Heart left ventricle (tissue), 16 donors: ENCODE measurements at regions of chr9 and their contacts with region 1.

Region 1: GRCh38 chr9:129080602-129081387 is at the start of gene DOLPP1:
- DNase-seq: peak; percentile 99 to 100 (median 100)
- ATAC-seq: peak; percentile 98 to 99 (median 98)
- H3K4me3 ChIP-seq: peak within 1 kb of the TSS; percentile 64 to 98 (median 84)
- H3K27ac ChIP-seq: peak within 1 kb of the TSS; percentile 42 to 93 (median 82)
- H3K4me1 ChIP-seq: peaks cover 6 to 26% (median 17%) of the 10 kb centered on the region in 12 donors
- H3K27me3 ChIP-seq: no peaks in the 10 kb centered on the region
- CTCF ChIP-seq: no peak
- POLR2A ChIP-seq: peak in 1 of 2 donors; percentile 53
- total RNA-seq, gene DOLPP1: 3.2 to 10.3 (median 5.8) TPM

Region 2: GRCh38 chr9:128881901-128882681 is 198.7 kb before region 1 on chr9 and contains the starts of genes KYAT1 and LRRC8A:
- intact Hi-C with region 1: no loop called
- DNase-seq: peak; percentile 98 to 99 (median 98)
- ATAC-seq: peak; percentile 87 to 94 (median 90)
- H3K4me3 ChIP-seq: peak within 1 kb of the TSS; percentile 80 to 100 (median 98)
- H3K27ac ChIP-seq: peak within 1 kb of the TSS; percentile 93 to 100 (median 99)
- H3K4me1 ChIP-seq: peaks cover 8 to 82% (median 49%) of the 10 kb centered on the region in 12 donors
- H3K27me3 ChIP-seq: no peaks in the 10 kb centered on the region
- CTCF ChIP-seq: peak in 2 of 12 donors; percentile 14 to 29
- POLR2A ChIP-seq: peak in 1 of 2 donors; percentile 88
- total RNA-seq, gene KYAT1: 9.5 to 16.7 (median 13.4) TPM
- total RNA-seq, gene LRRC8A: 16.2 to 76.4 (median 28.8) TPM

Region 3: DNA sequence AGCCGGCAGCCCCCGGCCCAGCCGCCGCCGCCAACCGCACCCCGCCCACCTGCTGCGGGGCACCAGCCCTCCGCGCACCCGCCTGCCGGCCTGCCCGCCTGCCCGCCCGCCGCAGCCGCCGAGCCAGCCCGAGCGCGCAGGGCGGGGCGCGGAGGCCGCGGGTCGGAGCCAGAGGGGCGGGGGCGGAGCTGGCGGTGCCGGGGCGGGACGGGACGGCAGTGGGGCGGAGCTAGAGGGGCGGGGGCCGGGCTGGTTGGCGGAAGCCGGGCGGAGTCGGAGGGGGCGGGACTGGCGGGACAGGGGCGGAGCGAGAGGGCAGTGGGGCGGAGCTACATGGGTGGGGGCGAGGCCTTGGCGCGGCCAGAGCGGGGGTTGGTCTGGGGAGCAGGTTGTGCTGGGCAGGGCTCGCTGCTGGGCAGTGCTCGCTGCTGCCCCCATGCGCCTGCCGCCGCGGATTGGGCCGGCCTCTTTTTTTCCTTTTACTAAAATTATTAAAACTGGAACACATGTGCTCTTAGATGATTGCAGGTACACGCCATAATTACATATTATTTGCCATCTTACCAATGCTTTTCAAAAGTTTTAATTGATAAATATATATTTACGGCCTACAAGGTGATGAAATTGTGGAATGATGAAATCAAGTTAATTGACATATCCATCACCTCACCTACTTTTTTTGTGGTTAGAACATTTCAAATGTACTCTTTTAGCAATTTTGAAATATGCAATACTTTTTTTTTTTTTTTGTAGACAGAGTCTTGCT is 52.4 kb before region 1 on chr9 and contains the start of gene SH3GLB2:
- intact Hi-C with region 1: loop called in 1 of 10 experiments (anchors 10 kb)
- DNase-seq: peak; percentile 95 to 99 (median 96)
- ATAC-seq: peak; percentile 97 to 99 (median 98)
- H3K4me3 ChIP-seq: peak within 1 kb of the TSS; percentile 65 to 96 (median 80)
- H3K27ac ChIP-seq: peak within 1 kb of the TSS in 11 of 12 donors; percentile 12 to 81 (median 63)
- H3K4me1 ChIP-seq: peaks cover 0 to 35% (median 18%) of the 10 kb centered on the region in 12 donors
- H3K27me3 ChIP-seq: no peaks in the 10 kb centered on the region
- CTCF ChIP-seq: peak; percentile 84 to 97 (median 92)
- POLR2A ChIP-seq: no peak
- total RNA-seq, gene SH3GLB2: 27.3 to 42.7 (median 36.5) TPM

Region 4: DNA sequence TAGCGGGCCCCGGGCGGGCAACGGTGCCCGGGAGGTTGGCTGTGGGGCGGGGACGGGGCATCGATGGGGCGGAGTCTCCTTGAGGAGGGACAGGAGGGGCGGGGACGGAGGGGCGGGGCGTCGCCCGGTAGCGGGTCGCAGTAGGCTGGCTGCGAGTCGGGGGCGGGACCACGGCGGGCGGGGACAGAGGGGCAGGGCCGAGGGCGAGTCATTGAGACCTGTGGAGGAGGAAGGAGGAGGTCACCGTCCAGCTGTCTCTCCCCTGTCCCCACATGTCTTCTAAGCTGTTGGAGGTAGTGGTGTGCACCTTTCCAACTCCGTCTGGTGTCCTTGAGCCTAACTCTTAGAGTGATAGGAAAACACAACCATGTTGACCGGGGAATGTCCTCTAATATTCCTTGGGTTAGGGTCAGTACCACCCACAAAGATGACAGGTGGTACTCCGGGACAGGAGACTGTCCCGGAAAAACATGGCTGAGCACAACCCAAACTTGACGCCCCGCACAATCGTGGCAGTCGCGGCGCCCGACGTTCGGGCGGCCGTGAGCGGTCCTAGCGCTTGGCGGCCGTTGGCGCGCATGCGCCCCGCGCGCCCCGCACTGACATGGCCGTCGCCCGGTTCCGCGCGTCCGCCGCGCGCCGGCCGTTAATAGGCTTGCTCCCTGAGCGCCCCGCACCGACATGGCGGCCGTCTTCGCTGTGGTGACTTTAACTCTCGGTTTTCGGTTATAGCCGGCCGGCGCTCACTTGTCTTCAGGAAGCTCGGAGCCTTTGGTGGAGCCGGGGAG is 30.1 kb after region 1 on chr9 and contains the starts of genes CRAT and PTPA:
- intact Hi-C with region 1: loop called in 1 of 10 experiments (anchors 1 kb)
- DNase-seq: peak; percentile 98 to 99 (median 99)
- ATAC-seq: peak; percentile 90 to 94 (median 91)
- H3K4me3 ChIP-seq: peak within 1 kb of the TSS; percentile 77 to 100 (median 88)
- H3K27ac ChIP-seq: peak within 1 kb of the TSS; percentile 91 to 100 (median 97)
- H3K4me1 ChIP-seq: peaks cover 0 to 51% (median 26%) of the 10 kb centered on the region in 12 donors
- H3K27me3 ChIP-seq: no peaks in the 10 kb centered on the region
- CTCF ChIP-seq: no peak
- POLR2A ChIP-seq: peak; percentile 98 to 99
- total RNA-seq, gene CRAT: 50.8 to 126 (median 68.2) TPM
- total RNA-seq, gene PTPA: 96.0 to 212 (median 172) TPM